AG04450 (cell line): ENCODE measurements at regions of chr6 and their contacts with region 1.

Region 1: GRCh38 chr6:106360410-106360988 is at the start of gene CRYBG1:
- DNase-seq: no peak
- H3K4me3 ChIP-seq: peak within 1 kb of the TSS; percentile 44
- H3K27ac ChIP-seq: no peak within 1 kb of the TSS
- H3K27me3 ChIP-seq: peaks cover 42% of the 10 kb centered on the region
- CTCF ChIP-seq: peak; percentile 76
- polyA plus RNA-seq, gene CRYBG1: 1.8 and 1.9 TPM in 2 replicates

Region 2: GRCh38 chr6:106039836-106040592 is 320.5 kb before region 1 on chr6:
- CTCF ChIA-PET with region 1: no interaction called
- POLR2A ChIA-PET with region 1: no interaction called
- DNase-seq: no peak
- H3K4me3 ChIP-seq: no peak overlapping the region
- H3K27ac ChIP-seq: no peak overlapping the region
- H3K27me3 ChIP-seq: no peaks in the 10 kb centered on the region
- CTCF ChIP-seq: no peak

Region 3: GRCh38 chr6:106347341-106347740 is 13.2 kb before region 1 on chr6:
- CTCF ChIA-PET with region 1: interaction called, 29 read pairs
- POLR2A ChIA-PET with region 1: no interaction called
- DNase-seq: no peak
- H3K4me3 ChIP-seq: no peak overlapping the region
- H3K27ac ChIP-seq: no peak overlapping the region
- H3K27me3 ChIP-seq: no peaks in the 10 kb centered on the region
- CTCF ChIP-seq: no peak

Region 4: DNA sequence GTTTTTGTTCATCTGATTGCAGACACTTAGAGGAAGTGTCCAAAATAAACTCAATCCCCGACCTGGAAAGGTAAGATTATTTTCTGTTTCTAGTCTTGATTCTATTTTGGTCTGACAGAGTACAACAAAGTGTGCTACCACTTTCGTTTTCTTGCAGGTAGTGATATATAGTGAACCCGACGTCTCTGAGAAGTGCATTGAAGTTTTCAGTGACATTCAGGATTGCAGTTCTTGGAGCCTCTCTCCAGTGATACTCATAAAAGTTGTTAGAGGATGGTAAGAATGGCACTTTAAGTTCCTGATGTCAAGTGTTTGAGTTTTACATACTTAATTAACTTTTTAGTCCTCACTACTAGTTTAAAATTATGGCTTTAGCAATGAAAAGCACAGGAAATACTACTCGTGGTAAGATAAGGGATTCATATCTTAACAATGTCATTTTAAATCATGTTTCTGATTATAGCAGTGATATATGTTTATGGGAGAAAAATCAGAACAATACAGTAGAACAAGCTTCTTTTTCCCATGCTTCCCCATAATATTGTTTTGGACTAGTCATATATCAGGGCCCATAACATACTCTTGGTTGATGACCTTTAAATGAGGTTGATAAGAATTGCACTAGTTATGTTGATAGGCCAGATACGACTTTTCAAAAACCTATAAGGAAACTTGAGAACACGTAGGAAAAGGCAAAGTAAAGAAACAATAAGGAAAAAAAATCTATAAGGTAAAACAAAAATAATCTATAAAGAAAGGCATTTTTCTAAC is 164.8 kb after region 1 on chr6:
- CTCF ChIA-PET with region 1: no interaction called
- POLR2A ChIA-PET with region 1: no interaction called
- DNase-seq: no peak
- H3K4me3 ChIP-seq: no peak overlapping the region
- H3K27ac ChIP-seq: no peak overlapping the region
- H3K27me3 ChIP-seq: no peaks in the 10 kb centered on the region
- CTCF ChIP-seq: no peak